Psoas muscle (tissue), 8 donors: ENCODE measurements at regions of chr11 and their contacts with region 1.

Region 1: GRCh38 chr11:7892840-7893254 is 38.2 kb downstream of the OR10A6 start:
- DNase-seq: no peak
- ATAC-seq: peak; percentile 48 to 72 (median 52)
- H3K4me3 ChIP-seq: no peak overlapping the region
- H3K27ac ChIP-seq: no peak overlapping the region
- H3K4me1 ChIP-seq: no peaks in the 10 kb centered on the region
- H3K27me3 ChIP-seq: no peaks in the 10 kb centered on the region
- CTCF ChIP-seq: peak; percentile 57

Region 2: DNA sequence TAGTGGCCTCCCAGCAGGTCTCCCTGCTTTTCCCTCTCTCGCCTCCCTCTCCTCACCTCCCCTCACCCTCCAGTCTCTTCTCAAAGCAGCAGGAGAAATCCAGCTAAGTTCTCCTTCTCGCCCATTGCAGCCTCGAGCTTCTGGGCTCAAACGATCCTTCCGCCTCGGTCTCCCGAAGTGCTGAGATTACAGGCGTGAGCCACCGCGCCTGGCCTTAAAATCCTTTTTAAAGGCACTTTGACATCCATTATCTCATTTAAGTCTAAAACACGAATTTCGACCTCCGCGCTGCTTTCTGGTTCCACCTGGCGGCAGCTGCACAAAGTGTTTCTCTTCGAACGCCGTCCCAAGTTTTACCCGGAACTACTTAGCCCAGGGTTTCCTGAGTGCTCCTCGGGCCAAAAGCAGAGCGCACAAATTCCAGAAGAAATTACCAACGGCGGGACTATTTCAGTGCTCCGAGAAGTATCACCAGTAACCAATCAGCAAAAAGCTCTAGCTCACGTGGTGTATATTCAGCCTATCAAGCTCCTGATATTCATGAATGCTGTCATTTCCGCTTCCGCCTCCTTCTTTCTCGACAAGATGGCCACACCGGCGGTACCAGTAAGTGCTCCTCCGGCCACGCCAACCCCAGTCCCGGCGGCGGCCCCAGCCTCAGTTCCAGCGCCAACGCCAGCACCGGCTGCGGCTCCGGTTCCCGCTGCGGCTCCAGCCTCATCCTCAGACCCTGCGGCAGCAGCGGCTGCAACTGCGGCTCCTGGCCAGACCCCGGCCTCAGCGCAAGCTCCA is 94.1 kb after region 1 on chr11 and contains the start of gene EIF3F:
- intact Hi-C with region 1: loop called (anchors 2 to 5 kb)
- DNase-seq: peak; percentile 84 to 91
- ATAC-seq: peak; percentile 100
- H3K4me3 ChIP-seq: peak within 1 kb of the TSS; percentile 76
- H3K27ac ChIP-seq: peak within 1 kb of the TSS; percentile 80
- H3K4me1 ChIP-seq: peaks cover 28% of the 10 kb centered on the region
- H3K27me3 ChIP-seq: no peaks in the 10 kb centered on the region
- CTCF ChIP-seq: peak; percentile 85
- total RNA-seq, gene EIF3F: 149 to 208 (median 202) TPM

Region 3: GRCh38 chr11:8092587-8093424 is 200.0 kb after region 1 on chr11:
- intact Hi-C with region 1: loop called in 1 of 2 experiments (anchors 2 kb)
- DNase-seq: peak; percentile 56 to 69
- ATAC-seq: peak; percentile 61 to 75 (median 65)
- H3K4me3 ChIP-seq: no peak overlapping the region
- H3K27ac ChIP-seq: no peak overlapping the region
- H3K4me1 ChIP-seq: no peaks in the 10 kb centered on the region
- H3K27me3 ChIP-seq: no peaks in the 10 kb centered on the region
- CTCF ChIP-seq: peak; percentile 51